ENCODE measurements at regions of chr16 and their contacts with region 1.

Region 1: DNA sequence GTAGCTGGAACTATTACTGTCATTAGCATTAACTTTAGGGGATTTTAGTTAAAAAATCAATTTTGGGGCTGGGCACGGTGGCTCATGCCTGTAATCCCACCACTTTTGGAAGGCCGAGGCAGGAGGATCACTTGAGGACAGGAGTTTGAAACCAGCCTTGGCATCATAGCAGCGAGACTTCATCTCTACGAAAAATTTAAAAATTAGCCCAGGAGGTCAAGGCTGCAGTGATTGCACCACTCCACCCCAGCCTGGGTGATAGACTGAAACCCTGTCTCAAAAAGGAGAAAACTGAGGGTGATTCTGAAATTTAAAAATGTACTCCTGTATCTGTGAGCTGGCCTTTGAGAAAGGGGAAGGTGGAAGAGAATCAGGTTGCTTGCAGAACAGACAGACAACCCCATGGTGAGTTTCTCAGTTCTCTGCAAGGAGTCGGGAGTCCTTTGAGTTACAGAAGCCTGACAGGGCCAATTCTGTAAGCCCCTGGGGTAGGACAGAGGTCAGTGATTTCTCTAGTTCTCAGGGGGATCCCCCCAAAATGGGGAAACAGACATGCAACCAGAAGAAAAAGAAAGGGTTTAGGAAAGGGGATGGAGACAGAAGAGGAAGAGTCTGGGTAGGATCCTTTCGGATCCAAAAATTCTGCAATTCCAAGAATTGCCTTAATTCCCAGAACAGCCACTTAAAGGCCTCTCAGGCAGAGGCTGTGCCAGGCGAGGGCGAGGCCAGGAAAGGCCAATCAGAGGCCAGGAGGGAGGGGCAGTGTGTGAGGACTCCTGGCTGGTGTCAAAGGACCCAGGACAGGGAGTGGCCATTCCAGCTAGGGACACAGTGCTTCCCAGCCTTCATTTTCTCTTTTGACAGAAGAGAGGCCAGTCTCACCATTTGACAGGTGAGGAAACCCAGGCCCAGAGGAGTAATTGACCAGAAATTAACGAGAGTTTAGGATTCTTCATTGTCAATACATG is 6.7 kb downstream of the NUPR1 start:
- DNase-seq: no peak
- ATAC-seq: peak; percentile 76
- H3K4me3 ChIP-seq: no peak overlapping the region
- H3K27ac ChIP-seq: no peak overlapping the region
- H3K4me1 ChIP-seq: no peaks in the 10 kb centered on the region
- H3K27me3 ChIP-seq: no peaks in the 10 kb centered on the region
- CTCF ChIP-seq: no peak

Region 2: GRCh38 chr16:26802440-26802839 is 1729.6 kb before region 1 on chr16:
- CTCF ChIA-PET with region 1: no interaction called
- POLR2A ChIA-PET with region 1: interaction called, 13 read pairs
- in situ Hi-C with region 1: no loop called
- intact Hi-C with region 1: no loop called
- DNase-seq: no peak
- ATAC-seq: no peak
- H3K4me3 ChIP-seq: no peak overlapping the region
- H3K27ac ChIP-seq: no peak overlapping the region
- H3K4me1 ChIP-seq: no peaks in the 10 kb centered on the region
- H3K27me3 ChIP-seq: peaks cover 2% of the 10 kb centered on the region; the same call in 1 of the 2 replicates
- CTCF ChIP-seq: no peak

Region 3: DNA sequence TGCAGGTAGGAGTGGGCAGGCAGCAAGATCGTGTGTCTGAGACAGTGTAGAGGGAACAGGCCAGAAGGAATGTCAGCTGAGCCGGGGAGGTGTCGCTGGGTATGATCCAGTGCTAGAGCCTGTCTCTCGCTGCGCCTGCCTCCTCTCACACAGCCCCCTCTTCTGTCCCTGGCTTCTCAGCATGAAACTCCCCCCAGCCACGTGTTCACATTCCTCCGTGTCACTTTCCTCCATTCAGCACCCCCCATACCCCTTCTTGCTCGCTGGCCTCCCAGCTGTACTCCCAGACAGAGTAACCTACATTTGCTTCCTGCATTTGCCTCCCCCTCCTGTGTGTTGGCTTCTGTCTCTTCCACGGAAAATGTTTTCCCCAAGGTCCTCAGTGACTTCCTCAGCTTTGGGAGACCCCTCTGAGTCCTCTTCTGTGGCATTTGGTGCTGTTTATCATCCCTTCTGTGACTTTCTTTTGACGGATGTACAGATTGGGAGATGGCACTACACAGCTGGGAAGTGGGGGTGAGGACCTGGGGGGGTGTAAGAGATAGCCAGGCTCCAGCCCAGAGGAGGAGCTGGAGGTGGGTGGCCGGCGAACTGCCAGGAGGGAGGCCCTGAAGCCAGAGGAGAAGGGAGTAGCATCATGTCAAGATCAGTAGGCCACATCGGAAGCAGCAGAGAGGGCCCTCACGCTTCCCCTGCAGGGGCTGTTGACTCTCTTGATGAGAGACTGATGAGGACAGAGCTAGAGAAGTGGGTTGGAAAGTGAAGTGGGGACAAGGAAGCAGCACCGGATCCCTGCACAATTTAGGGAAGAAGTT is 40.8 kb after region 1 on chr16:
- CTCF ChIA-PET with region 1: no interaction called
- POLR2A ChIA-PET with region 1: no interaction called
- in situ Hi-C with region 1: no loop called
- intact Hi-C with region 1: no loop called
- DNase-seq: no peak
- ATAC-seq: peak; percentile 30; the same call in 1 of the 2 replicates
- H3K4me3 ChIP-seq: no peak overlapping the region
- H3K27ac ChIP-seq: no peak overlapping the region
- H3K4me1 ChIP-seq: no peaks in the 10 kb centered on the region
- H3K27me3 ChIP-seq: no peaks in the 10 kb centered on the region
- CTCF ChIP-seq: no peak